ENCODE measurements at regions of chr18 and their contacts with region 1.

Region 1: DNA sequence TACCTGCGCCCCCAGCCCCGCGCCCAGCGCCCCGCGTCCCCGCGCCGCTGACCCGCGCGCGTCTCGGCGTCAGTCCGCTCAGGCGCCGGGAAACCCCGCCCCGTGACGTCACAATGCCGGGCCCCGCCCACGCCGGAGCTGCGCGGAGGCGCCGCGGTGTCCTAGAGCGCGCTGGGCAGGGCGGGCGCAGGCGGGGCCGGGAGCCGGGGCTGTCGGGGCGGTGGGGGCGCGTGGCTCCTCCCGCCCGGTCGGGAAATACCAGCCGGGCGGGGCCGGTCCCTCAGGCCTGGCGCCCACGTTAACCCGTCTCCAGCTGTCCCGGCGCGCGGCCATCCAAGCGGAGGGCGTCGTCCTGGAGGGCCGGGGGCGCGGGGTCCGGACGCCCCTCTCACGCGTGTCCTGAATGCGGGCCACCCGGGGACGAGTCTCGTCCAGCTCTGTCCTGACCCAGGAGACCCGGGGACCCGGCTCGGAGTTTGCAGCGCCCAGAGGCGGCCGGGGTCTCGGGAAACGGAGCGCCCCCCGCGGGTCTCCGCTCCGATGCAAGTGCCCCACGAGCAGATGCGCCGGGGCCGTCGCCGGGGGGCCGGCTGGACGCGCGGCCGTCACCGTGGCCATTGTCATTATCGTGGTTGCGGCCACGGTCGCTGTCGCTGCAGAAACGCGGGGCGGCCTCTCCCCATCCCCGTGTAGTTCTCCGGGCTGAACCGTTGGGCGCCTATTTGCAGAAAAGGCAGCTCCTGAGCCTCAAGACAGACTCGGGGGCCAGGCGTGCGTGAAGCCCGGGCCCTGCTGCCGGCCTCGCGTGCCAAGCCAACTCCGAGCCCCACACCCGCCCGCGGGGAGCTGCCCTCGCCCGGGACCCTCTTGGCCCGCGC is at the start of gene SLC66A2:
- DNase-seq: peak; percentile 93
- H3K4me3 Mint-ChIP-seq: peak within 1 kb of the TSS; percentile 83
- H3K27ac Mint-ChIP-seq: peak within 1 kb of the TSS; percentile 84
- H3K4me1 Mint-ChIP-seq: peaks cover 25% of the 10 kb centered on the region
- H3K27me3 Mint-ChIP-seq: peaks cover 10% of the 10 kb centered on the region
- total RNA-seq, gene SLC66A2: 28.3 to 34.6 TPM

Region 2: GRCh38 chr18:79905389-79905911 is 46.4 kb before region 1 on chr18:
- CTCF ChIA-PET with region 1: no interaction called
- POLR2A ChIA-PET with region 1: no interaction called
- DNase-seq: no peak
- H3K4me3 Mint-ChIP-seq: no peak overlapping the region
- H3K27ac Mint-ChIP-seq: peak overlapping the region; percentile 39
- H3K4me1 Mint-ChIP-seq: peaks cover 18% of the 10 kb centered on the region
- H3K27me3 Mint-ChIP-seq: no peaks in the 10 kb centered on the region

Region 3: DNA sequence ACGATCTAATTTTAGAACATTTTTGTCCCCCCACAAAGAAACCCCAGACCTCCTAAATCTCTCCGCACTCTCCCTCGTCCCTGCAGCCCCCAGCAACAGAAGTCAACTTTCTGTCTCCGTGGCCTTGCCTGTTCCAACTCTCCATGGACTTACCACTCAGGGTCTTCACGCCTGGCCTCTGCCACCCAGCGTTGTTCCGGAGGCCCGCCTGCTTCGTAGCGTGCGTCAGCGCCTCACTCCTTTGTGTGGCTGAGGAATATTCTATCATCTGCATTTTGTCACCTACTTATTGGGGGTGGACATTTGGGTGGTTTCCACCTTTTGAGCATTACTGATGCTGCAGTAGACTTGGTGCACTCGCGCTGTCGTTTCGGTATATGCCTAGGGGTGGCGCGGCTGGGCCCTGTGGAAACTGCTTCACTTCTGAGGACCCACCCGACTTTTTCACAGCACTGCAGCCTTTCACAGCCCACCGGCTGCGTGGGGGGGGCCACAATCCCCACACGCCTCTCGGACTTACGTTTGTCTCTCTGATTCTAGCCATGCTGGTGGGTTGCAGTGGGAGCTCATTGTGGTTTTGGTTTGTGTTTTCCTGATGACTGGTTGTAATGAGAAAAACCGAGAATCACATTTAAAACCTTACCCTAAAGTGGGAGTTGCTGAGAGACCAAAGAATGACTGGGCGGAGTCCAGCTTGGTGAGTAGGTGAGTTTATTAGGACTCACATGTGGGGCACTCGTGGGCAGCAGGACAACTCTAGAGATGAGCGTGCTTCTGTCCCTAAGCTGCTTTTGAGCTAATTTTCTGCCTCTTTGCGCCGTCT is 11.2 kb after region 1 on chr18:
- CTCF ChIA-PET with region 1: interaction called, 13 read pairs
- POLR2A ChIA-PET with region 1: no interaction called
- DNase-seq: peak; percentile 22
- H3K4me3 Mint-ChIP-seq: peak overlapping the region; percentile 14
- H3K27ac Mint-ChIP-seq: peak overlapping the region; percentile 71
- H3K4me1 Mint-ChIP-seq: peaks cover 50% of the 10 kb centered on the region
- H3K27me3 Mint-ChIP-seq: no peaks in the 10 kb centered on the region

Region 4: GRCh38 chr18:80009661-80010550 is 58.1 kb after region 1 on chr18:
- CTCF ChIA-PET with region 1: no interaction called
- POLR2A ChIA-PET with region 1: no interaction called
- DNase-seq: no peak
- H3K4me3 Mint-ChIP-seq: no peak overlapping the region
- H3K27ac Mint-ChIP-seq: no peak overlapping the region
- H3K4me1 Mint-ChIP-seq: no peaks in the 10 kb centered on the region
- H3K27me3 Mint-ChIP-seq: no peaks in the 10 kb centered on the region